ENCODE measurements at regions of chr14 and their contacts with region 1.

Region 1: DNA sequence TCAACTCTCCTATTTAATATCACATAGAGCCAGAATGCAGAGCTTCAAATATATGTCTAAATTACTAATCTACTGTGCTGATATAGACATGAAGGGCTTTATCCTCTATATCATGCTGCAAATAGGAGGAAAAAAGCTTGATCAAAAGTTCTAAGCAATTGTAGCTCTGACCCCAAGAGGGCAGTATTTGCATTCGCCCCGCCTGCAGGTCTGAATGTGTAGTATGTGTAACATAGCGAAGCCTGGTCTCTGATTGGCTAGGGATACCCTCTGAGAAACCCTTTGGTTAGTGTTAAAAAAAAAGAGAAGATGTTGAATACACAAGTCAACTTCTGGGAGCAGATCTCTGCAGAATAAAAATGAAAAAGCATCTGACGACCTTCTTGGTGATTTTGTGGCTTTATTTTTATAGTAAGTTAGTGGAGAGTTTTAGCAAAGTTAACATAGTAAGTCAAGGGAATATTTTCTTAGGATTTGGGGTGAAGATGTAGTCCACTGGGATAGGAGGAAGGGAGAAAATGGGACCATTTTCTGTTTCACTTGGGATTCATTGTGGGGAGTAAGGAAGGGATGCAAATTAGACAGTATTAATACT is 151.6 kb upstream of the OR4E1 start:
- DNase-seq: peak; percentile 62
- ATAC-seq: peak; percentile 95
- H3K4me3 Mint-ChIP-seq: peak overlapping the region; percentile 35
- H3K27ac Mint-ChIP-seq: no peak overlapping the region
- H3K4me1 Mint-ChIP-seq: peaks cover 4% of the 10 kb centered on the region
- H3K27me3 Mint-ChIP-seq: peaks cover 35% of the 10 kb centered on the region

Region 2: GRCh38 chr14:21840765-21841164 is 15.5 kb after region 1 on chr14:
- CTCF ChIA-PET with region 1: interaction called, 12 read pairs
- POLR2A ChIA-PET with region 1: no interaction called
- DNase-seq: no peak
- ATAC-seq: peak; percentile 63
- H3K4me3 Mint-ChIP-seq: peak overlapping the region; percentile 53
- H3K27ac Mint-ChIP-seq: peak overlapping the region; percentile 44
- H3K4me1 Mint-ChIP-seq: peaks cover 2% of the 10 kb centered on the region
- H3K27me3 Mint-ChIP-seq: peaks cover 34% of the 10 kb centered on the region

Region 3: DNA sequence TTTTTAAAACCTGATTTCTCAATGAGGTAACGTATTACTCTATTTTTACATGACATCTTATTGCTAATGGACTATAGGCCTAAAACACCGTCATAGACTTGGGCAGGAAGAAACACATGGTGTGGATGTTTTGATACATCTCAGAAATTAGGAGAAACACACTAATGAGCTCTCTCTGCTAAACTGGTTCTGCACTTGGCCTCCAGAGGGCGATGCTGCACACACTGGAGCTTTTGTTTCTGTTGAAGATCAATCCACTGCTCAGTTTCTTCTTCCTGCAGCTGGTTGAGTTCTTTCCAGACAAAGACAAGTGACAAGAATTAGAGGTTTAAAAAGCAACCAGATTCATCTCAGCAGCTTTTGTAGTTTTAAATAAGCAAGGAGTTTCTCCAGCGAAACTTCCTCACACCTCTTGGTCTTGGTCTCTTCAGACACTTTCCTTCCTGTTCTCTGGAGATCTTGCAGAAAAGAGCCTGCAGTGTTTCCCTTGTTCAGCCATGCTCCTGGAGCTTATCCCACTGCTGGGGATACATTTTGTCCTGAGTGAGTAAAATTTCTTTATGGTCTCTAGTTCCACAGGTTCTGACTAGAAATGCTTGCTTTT is 26.9 kb after region 1 on chr14:
- CTCF ChIA-PET with region 1: interaction called, 23 read pairs
- POLR2A ChIA-PET with region 1: no interaction called
- DNase-seq: peak; percentile 88
- ATAC-seq: peak; percentile 71
- H3K4me3 Mint-ChIP-seq: peak overlapping the region; percentile 77
- H3K27ac Mint-ChIP-seq: peak overlapping the region; percentile 88
- H3K4me1 Mint-ChIP-seq: peaks cover 13% of the 10 kb centered on the region
- H3K27me3 Mint-ChIP-seq: peaks cover 20% of the 10 kb centered on the region

Region 4: GRCh38 chr14:21965042-21965441 is 139.8 kb after region 1 on chr14:
- CTCF ChIA-PET with region 1: no interaction called
- POLR2A ChIA-PET with region 1: no interaction called
- DNase-seq: peak; percentile 70
- ATAC-seq: peak; percentile 92
- H3K4me3 Mint-ChIP-seq: peak overlapping the region; percentile 13
- H3K27ac Mint-ChIP-seq: peak overlapping the region; percentile 8
- H3K4me1 Mint-ChIP-seq: peaks cover 31% of the 10 kb centered on the region
- H3K27me3 Mint-ChIP-seq: peaks cover 6% of the 10 kb centered on the region

Measured in activated CD8-positive, alpha-beta T cell treated with anti-CD3 and anti-CD28 coated beads, Interleukin-2, amount 10 ng/mL, durations not matched to agents 7 days and 5 days (primary cell).